ENCODE measurements at regions of chr6 and their contacts with region 1.

Region 1: DNA sequence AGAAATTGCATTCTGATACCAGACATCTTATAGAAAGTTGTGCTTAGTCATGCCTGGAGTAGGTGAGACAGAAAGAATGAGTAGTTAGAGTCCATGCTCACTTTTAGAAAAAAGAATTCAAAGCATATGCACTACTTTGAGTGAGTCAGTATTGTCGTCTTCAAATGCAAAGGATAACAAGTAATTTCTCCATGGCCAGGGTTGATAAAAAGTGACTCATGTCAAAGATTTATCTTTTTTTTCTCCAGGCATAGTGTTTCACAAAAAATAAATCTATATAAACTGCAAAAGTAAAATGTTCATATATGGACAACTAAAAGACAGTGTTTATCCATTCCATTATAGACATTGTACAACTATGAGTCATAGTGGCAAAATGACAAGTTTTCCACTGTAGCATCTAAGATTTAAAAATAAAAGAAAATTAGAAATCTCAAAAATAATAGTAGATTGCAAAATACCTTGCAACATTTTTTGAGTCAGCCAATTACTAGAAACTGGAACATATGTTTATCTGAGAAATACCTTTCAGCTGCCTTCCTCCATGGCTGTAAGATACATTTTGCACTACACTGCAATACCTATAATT is 329.6 kb downstream of the GRIK2 start:
- DNase-seq: peak; percentile 98
- ATAC-seq: peak; percentile 91
- H3K4me3 ChIP-seq: no peak overlapping the region
- H3K27ac ChIP-seq: peak overlapping the region; percentile 81
- H3K4me1 ChIP-seq: peaks cover 4% of the 10 kb centered on the region
- H3K27me3 ChIP-seq: no peaks in the 10 kb centered on the region
- CTCF ChIP-seq: no peak
- POLR2A ChIP-seq: no peak
- RAD21 ChIP-seq: peak; percentile 8; the same call in 1 of the 2 replicates

Region 2: DNA sequence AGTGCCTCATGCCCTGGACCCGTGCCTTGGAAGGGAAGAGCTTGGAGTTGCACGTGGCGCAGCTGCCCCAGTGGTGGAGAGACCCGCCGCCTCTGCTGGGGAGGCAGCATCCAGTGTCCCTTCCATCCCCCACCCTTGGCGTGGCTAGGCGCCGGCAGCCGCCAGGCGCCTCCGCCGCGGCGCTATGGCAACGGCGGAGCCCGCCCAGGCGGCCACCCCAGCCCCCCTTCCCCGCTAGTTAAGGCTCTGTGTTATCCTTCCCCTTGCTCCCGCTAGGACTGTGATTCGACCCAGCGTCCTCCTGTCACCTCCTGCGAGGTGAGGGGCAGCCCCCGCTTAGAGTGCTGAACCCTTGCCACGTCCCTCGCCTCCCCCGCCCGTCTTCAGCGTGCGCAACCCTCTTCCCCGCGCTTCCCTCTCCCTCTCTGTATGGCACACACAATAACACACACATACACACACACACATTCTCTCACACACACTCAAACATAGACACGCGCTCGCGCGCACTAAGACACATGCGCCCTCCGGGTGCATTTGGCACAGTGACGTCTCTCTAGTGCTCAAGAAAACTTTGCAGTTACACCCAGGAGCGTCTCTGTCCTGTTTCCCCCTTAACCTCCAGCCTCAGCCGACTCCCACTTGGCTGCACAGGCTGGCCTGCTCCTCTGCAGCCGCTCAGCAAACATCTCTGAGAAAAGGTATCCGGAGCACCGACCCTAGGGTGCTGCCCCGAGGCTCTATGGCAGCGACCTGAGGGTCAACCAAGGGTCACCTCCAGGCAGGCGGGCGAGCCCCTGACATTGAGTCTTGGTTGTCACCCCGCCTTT is 321.1 kb before region 1 on chr6:
- CTCF ChIA-PET with region 1: no interaction called
- POLR2A ChIA-PET with region 1: no interaction called
- dilution Hi-C with region 1: no loop called
- in situ Hi-C with region 1: no loop called
- intact Hi-C with region 1: loop called (anchors 2 kb)
- DNase-seq: peak; percentile 46
- ATAC-seq: peak; percentile 65
- H3K4me3 ChIP-seq: peak overlapping the region; percentile 54
- H3K27ac ChIP-seq: peak overlapping the region; percentile 20; the same call in 1 of the 2 replicates
- H3K4me1 ChIP-seq: 0 out of 2 replicates have a peak, but pooled peaks cover 8% of the 10 kb centered on the region
- H3K27me3 ChIP-seq: no peaks in the 10 kb centered on the region; the same call in 1 of the 2 replicates
- CTCF ChIP-seq: no peak
- POLR2A ChIP-seq: no peak
- RAD21 ChIP-seq: no peak

Region 3: GRCh38 chr6:101550451-101550850 is 172.6 kb before region 1 on chr6:
- CTCF ChIA-PET with region 1: no interaction called
- POLR2A ChIA-PET with region 1: no interaction called
- dilution Hi-C with region 1: no loop called
- in situ Hi-C with region 1: no loop called
- intact Hi-C with region 1: loop called (anchors 5 kb)
- DNase-seq: no peak
- ATAC-seq: no peak
- H3K4me3 ChIP-seq: no peak overlapping the region
- H3K27ac ChIP-seq: no peak overlapping the region
- H3K4me1 ChIP-seq: peaks cover 7% of the 10 kb centered on the region
- H3K27me3 ChIP-seq: no peaks in the 10 kb centered on the region
- CTCF ChIP-seq: no peak
- POLR2A ChIP-seq: no peak
- RAD21 ChIP-seq: no peak

Region 4: GRCh38 chr6:101597693-101598092 is 125.4 kb before region 1 on chr6:
- CTCF ChIA-PET with region 1: no interaction called
- POLR2A ChIA-PET with region 1: no interaction called
- dilution Hi-C with region 1: no loop called
- in situ Hi-C with region 1: no loop called
- intact Hi-C with region 1: loop called (anchors 5 kb)
- DNase-seq: peak; percentile 94
- ATAC-seq: peak; percentile 88
- H3K4me3 ChIP-seq: no peak overlapping the region
- H3K27ac ChIP-seq: no peak overlapping the region
- H3K4me1 ChIP-seq: peaks cover 4% of the 10 kb centered on the region; the same call in 1 of the 2 replicates
- H3K27me3 ChIP-seq: no peaks in the 10 kb centered on the region
- CTCF ChIP-seq: no peak
- POLR2A ChIP-seq: no peak
- RAD21 ChIP-seq: no peak

Region 5: GRCh38 chr6:101705866-101706265 is 17.2 kb before region 1 on chr6:
- CTCF ChIA-PET with region 1: no interaction called
- POLR2A ChIA-PET with region 1: no interaction called
- dilution Hi-C with region 1: no loop called
- in situ Hi-C with region 1: no loop called
- intact Hi-C with region 1: no loop called
- DNase-seq: peak; percentile 43
- ATAC-seq: no peak
- H3K4me3 ChIP-seq: no peak overlapping the region
- H3K27ac ChIP-seq: no peak overlapping the region
- H3K4me1 ChIP-seq: peaks cover under 1% of the 10 kb centered on the region; the same call in 1 of the 2 replicates
- H3K27me3 ChIP-seq: no peaks in the 10 kb centered on the region
- CTCF ChIP-seq: no peak
- POLR2A ChIP-seq: no peak
- RAD21 ChIP-seq: no peak